ENCODE measurements at regions of chr1 and their contacts with region 1.

Region 1: DNA sequence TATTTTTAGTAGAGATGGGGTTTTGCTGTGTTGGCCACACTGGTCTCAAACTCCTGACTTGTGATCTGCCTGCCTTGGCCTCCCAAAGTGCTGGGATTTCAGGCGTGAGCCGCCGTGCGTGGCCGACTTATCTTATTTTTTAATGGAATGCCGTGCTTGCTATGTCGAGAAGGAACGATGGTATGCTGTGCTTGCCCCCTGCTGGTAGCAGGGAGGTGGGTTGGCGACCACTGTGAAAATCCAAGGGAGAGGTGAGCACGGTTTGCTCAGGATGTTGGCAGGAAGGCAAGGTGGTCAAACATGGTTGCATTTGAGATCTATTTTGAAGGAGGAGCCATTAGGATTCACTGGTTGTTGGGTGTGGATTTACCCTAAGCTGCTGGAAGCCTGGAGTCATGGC is 45.8 kb upstream of the RCC2 start:
- DNase-seq: peak in 2 of 35 experiments; percentile 2 to 16
- ATAC-seq: no peak
- H3K4me3 ChIP-seq: no peak overlapping the region
- H3K4me3 Mint-ChIP-seq: no peak overlapping the region
- H3K27ac ChIP-seq: no peak overlapping the region
- H3K27ac Mint-ChIP-seq: no peak overlapping the region
- H3K4me1 ChIP-seq: no peaks in the 10 kb centered on the region
- H3K4me1 Mint-ChIP-seq: no peaks in the 10 kb centered on the region
- H3K27me3 ChIP-seq: peaks cover 0 to 4% of the 10 kb centered on the region in 2 experiments
- H3K27me3 Mint-ChIP-seq: peaks cover 12 to 17% of the 10 kb centered on the region in 2 donors

Region 2: GRCh38 chr1:15953791-15954211 is 1531.5 kb before region 1 on chr1:
- CTCF ChIA-PET with region 1: no interaction called
- POLR2A ChIA-PET with region 1: interaction called in 1 of 2 experiments, 10 read pairs
- DNase-seq: no peak
- ATAC-seq: no peak
- H3K4me3 ChIP-seq: no peak overlapping the region
- H3K4me3 Mint-ChIP-seq: no peak overlapping the region
- H3K27ac ChIP-seq: no peak overlapping the region
- H3K27ac Mint-ChIP-seq: peak overlapping the region; percentile 19 to 60
- H3K4me1 ChIP-seq: peaks cover 12 to 72% of the 10 kb centered on the region in 2 experiments
- H3K4me1 Mint-ChIP-seq: peaks cover 86 to 91% (median 91%) of the 10 kb centered on the region in 3 donors
- H3K27me3 ChIP-seq: no peaks in the 10 kb centered on the region
- H3K27me3 Mint-ChIP-seq: no peaks in the 10 kb centered on the region

Region 3: GRCh38 chr1:17520071-17520813 is 35.0 kb after region 1 on chr1:
- CTCF ChIA-PET with region 1: no interaction called
- POLR2A ChIA-PET with region 1: no interaction called
- DNase-seq: no peak
- ATAC-seq: no peak
- H3K4me3 ChIP-seq: no peak overlapping the region
- H3K4me3 Mint-ChIP-seq: no peak overlapping the region
- H3K27ac ChIP-seq: no peak overlapping the region
- H3K27ac Mint-ChIP-seq: peak overlapping the region in 1 of 2 donors; percentile 10
- H3K4me1 ChIP-seq: no peaks in the 10 kb centered on the region
- H3K4me1 Mint-ChIP-seq: no peaks in the 10 kb centered on the region
- H3K27me3 ChIP-seq: peaks cover 4 to 48% of the 10 kb centered on the region in 2 experiments
- H3K27me3 Mint-ChIP-seq: peaks cover 22 to 45% of the 10 kb centered on the region in 2 donors